ENCODE measurements at regions of chr22 and their contacts with region 1.

Region 1: DNA sequence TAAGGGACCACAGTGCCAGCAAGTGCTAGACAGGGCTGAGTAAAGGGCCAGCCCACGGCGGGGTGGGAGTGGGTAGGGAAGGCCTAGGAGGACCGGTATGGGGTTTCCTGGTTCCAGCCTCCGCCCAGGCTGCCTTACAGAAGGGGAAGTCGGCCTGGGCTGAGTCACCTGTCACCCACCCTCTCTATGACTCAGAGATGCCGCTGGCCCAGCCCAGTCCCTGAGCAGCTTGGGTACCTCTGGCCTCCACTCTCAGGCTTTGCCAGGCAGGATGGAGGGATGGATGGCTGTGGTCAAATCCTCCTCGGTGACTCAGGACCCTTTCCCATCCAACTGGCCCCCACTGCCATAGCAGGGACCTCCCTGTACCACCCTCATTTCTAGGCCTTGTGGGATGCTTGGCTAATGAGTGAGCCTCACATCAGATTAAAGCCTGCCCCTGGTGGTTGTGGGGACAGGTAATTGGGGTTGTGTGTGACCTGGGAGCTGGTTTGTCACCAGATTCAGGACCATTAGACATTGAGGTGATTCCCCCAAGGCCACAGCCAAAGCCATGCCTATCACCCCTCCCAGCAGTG is 13.9 kb downstream of the SLC35E4 start:
- DNase-seq: peak; percentile 91
- H3K4me3 Mint-ChIP-seq: peak overlapping the region; percentile 40
- H3K27ac Mint-ChIP-seq: peak overlapping the region; percentile 92
- H3K4me1 Mint-ChIP-seq: peaks cover 38% of the 10 kb centered on the region
- H3K27me3 Mint-ChIP-seq: no peaks in the 10 kb centered on the region

Region 2: DNA sequence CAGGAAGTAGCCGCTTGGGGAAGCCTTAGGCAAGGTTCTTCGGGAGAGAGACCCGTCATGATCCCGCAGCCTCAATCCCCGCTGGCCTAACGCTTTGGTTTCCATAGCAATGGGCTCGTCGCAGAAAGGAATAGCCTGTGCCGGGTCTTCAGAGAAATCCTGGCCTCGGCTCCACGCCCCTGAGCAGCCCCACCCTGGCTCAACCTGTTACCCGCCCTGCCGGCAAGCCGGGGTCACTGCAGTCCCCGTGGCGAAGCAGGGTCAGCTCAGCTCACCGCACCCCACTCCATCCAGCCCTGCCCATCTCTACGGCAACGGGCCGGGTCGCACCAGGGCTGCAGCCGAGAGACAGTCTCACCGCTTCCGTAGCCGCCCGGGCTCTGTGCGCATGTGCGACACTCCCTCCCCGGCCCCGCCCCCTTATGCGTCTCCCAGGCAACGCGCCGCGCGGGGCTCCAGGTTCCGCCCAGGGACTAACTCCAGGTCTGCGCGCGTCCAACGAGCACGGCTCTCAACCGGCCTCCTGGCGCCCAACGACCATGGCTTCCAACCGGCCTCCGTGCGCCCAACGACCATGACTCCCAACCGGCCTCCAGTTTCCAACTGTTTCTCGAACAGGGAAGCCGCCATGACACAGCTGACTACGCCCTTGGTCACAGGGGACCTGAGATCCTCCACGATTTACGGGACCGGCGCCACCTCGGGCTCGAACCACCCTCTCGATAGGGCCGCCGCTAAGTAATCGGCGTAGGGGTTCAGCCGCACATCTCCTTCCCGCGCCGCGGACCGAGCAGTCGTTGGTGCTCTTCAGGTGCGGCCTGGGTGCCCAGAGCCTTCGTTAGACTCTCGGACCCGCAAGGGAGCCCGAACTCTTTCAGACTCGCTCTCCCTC is 18.2 kb after region 1 on chr22 and contains the start of gene DUSP18:
- intact Hi-C with region 1: loop called (anchors 1 kb)
- DNase-seq: peak; percentile 98
- H3K4me3 Mint-ChIP-seq: peak within 1 kb of the TSS; percentile 93
- H3K27ac Mint-ChIP-seq: peak within 1 kb of the TSS; percentile 92
- H3K4me1 Mint-ChIP-seq: peaks cover 29% of the 10 kb centered on the region
- H3K27me3 Mint-ChIP-seq: peaks cover 2% of the 10 kb centered on the region
- total RNA-seq, gene DUSP18: 8.0 and 10.3 TPM in 2 replicates

Region 3: DNA sequence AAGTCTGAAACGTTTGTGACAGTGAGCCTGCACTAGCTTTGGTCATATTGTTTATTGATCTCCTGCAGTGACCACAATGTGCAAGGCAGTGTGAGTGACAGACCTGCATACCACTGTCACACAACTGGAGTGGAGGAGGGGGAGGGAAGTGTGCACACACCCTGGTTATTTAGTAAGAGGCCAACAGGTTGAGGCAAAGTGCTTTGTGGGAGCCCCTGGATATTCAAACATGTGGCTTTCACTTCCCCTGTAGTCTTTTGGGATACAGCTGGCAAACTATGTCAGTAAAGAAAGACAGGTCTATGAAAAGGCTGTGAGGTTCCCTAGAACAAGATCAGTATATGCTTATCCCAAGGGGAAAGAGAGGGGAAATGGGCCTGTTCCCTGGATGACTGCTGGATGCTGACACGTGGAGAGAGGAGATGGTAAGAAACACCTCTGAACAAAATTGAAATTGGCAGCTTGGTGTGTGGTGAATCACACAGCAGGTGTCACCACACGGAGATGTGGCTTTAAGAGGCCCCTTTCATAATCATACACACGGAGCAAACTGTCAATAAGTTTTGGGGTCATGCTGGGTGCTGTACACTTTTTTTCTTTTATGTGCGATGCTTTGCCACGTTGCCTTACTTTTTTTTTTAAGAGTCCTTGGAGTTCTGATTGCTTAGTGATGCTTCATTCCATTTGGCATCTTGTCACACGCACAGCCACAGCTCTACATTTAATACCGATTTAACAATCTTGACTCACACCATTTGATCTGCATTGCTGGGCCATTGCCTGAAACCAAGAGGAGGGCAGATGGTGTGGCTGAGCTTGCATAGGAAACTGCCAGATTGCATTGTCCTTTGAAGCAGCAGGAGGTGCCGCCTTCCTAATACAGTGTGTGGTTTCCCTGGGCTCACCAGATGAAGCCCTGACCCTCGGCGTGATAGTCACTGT is 56.5 kb after region 1 on chr22:
- intact Hi-C with region 1: loop called (anchors 2 kb)
- DNase-seq: peak; percentile 62
- H3K4me3 Mint-ChIP-seq: no peak overlapping the region
- H3K27ac Mint-ChIP-seq: peak overlapping the region; percentile 72
- H3K4me1 Mint-ChIP-seq: peaks cover 31% of the 10 kb centered on the region
- H3K27me3 Mint-ChIP-seq: no peaks in the 10 kb centered on the region

Measured in activated CD4-positive, alpha-beta T cell treated with anti-CD3 and anti-CD28 coated beads, Interleukin-2, amount 10 ng/mL, durations not matched to agents 24 days and 14 days (primary cell).